Panc1 (cell line): ENCODE measurements at regions of chrX and their contacts with region 1.

Region 1: GRCh38 chrX:118345401-118346257 is at the start of gene WDR44:
- DNase-seq: peak; percentile 93
- ATAC-seq: peak; percentile 97
- H3K4me3 ChIP-seq: peak within 1 kb of the TSS; percentile 94 to 99
- H3K27ac ChIP-seq: peak within 1 kb of the TSS; percentile 94
- H3K4me1 ChIP-seq: peaks cover 28% of the 10 kb centered on the region
- H3K27me3 ChIP-seq: no peaks in the 10 kb centered on the region
- CTCF ChIP-seq: no peak
- total RNA-seq, gene WDR44: 22.3 TPM

Region 2: DNA sequence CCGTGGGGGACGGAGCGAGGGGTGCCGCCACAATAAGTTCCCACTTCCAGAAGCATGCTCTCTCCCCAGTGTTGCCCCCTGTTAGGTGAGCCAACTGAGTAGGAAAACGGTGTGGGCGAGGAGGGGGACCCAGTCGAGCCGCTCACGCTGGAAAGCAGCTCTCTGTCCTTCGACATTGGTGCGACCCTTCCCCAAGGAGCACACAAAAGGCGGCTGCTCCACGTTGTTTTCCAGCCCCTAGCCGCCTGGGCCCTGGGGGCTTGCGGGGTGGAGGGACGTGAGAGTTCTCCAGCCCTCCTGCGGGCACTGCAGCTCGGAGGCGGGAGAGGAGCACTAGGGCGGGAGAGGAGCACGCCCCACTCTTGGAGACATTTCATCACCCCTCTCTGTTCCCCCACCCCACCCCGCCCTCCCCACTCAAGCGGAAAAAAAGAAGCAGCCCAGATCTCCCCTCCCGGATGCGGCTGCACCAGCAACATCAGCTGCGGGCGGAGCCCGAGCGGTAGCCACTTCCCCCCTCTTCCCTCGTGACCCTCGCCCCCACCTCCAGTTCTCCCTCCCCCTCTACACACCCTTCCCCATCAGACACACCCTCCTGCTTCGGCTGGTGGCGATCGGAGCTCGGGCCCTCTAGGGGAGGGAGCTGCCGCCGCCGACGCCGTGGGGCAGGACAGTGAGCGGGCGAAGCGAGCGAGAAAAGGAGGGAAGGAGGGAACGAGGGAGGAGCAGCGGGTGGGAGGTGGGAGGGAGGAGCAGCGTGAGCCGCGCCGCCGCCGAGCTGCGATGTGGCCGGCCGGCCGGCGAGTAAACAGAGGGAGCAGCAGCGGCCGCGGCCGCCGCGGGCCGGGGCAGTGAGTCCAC is 149.7 kb after region 1 on chrX and contains the start of gene DOCK11:
- CTCF ChIA-PET with region 1: interaction called, 12 read pairs
- POLR2A ChIA-PET with region 1: no interaction called
- in situ Hi-C with region 1: no loop called
- intact Hi-C with region 1: no loop called
- DNase-seq: no peak
- ATAC-seq: peak; percentile 89
- H3K4me3 ChIP-seq: peak within 1 kb of the TSS; percentile 53 to 59
- H3K27ac ChIP-seq: no peak within 1 kb of the TSS
- H3K4me1 ChIP-seq: peaks cover 8% of the 10 kb centered on the region
- H3K27me3 ChIP-seq: peaks cover 12% of the 10 kb centered on the region
- CTCF ChIP-seq: no peak
- total RNA-seq, gene DOCK11: 2.0 TPM